OCI-LY7 (cell line): ENCODE measurements at regions of chr9 and their contacts with region 1.

Region 1: DNA sequence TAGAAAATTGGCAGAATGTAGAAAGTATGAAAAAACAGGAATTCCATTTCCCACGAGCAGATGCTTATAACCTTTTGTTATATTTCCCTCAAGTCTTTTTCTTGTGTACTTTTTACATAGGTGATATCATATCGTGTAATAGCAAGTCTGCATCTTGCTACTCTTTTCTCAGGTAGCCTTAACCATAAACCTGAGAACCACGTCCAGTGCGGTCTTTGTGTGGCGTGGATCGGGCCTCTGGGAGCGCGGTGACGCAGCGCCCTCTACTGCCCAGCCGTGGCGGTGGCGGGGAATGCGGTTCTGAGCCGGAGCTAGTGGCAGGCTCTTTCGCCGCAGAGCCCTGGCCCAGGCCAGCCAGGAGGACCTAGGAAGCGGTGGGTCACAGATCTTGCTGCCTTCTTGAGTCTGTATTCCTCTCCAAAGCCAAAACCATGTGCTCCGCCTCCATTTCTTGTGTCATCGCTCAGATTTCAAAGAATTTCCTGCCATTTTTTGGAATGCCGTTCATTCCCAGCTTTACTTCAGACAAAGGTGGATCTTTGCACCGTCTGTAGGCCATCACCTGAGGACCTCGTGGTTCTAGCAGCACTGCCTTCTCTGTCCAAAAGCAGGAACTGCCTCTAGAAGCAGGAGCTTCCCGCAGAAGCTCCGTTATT is 71.9 kb downstream of the MVB12B start:
- DNase-seq: peak; percentile 54
- H3K4me3 ChIP-seq: no peak overlapping the region
- H3K27ac ChIP-seq: no peak overlapping the region
- H3K4me1 ChIP-seq: no peaks in the 10 kb centered on the region
- CTCF ChIP-seq: peak; percentile 98

Region 2: GRCh38 chr9:125407974-125408900 is 990.3 kb before region 1 on chr9:
- CTCF ChIA-PET with region 1: no interaction called
- POLR2A ChIA-PET with region 1: no interaction called
- intact Hi-C with region 1: loop called (anchors 2 kb)
- DNase-seq: peak; percentile 84
- H3K4me3 ChIP-seq: peak overlapping the region; percentile 60
- H3K27ac ChIP-seq: no peak overlapping the region
- H3K4me1 ChIP-seq: peaks cover 21% of the 10 kb centered on the region
- CTCF ChIP-seq: peak; percentile 83

Region 3: DNA sequence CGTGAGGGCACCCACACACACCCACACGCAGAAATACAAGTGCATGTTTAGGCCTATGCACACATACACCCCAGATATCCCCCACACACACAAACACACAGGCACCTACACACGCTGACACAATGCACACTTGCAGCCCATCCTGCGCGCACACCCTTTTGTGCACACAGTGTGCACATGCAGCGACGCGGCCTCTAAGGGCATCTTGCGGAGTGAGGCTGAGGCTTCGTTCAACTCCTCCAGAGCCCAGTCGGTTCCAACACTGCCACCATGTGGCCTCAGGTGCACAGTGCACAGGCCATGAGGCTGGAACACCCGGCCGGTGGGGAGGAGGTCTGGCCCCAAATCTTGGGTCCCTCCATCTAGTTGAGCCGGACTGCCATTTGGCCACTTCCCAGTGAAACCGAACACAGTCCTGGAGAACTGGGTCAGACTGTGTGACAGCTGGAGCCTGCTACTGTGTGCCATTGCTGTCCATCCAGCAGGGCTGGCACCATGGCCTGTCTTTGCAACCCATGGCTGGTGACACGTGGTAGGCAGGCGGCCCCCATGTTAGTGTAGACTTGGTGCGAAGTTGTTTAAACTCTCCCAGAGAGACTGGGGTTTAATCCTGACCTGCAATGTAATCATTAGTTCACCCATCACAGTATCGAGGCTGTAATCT is 169.6 kb before region 1 on chr9:
- CTCF ChIA-PET with region 1: no interaction called
- POLR2A ChIA-PET with region 1: no interaction called
- intact Hi-C with region 1: no loop called
- DNase-seq: peak; percentile 55
- H3K4me3 ChIP-seq: no peak overlapping the region
- H3K27ac ChIP-seq: no peak overlapping the region
- H3K4me1 ChIP-seq: no peaks in the 10 kb centered on the region
- CTCF ChIP-seq: peak; percentile 88

Region 4: DNA sequence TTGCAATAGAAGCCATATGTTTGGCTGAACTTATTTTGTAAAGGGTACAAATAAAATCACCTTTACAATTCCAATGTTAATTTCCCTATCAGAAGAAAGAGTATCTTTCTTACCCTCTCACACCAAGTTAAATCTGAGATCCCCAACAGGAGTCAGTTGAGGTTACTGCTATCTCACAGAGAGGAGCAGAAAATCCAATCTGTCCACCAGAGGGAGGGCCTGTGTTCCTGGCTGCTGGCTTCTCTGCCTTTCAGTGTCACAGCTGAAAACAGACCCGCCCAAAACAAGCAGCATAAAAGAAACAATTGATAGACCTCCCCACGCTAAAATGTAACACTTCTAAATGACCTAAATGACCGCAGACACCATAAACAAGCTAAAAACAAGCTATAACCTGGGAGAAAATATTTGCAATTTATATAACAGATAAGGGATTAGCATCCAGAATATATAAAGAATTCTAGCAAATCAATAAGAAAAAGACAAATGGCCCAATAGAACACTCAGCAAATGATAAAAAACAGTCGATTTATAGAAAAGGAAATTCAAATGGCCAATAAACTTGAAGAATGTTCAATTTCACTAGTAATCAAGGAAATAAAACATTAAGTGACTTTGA is 96.4 kb before region 1 on chr9:
- CTCF ChIA-PET with region 1: no interaction called
- POLR2A ChIA-PET with region 1: interaction called, 3 read pairs
- intact Hi-C with region 1: loop called (anchors 2 kb)
- DNase-seq: peak; percentile 44
- H3K4me3 ChIP-seq: no peak overlapping the region
- H3K27ac ChIP-seq: no peak overlapping the region
- H3K4me1 ChIP-seq: no peaks in the 10 kb centered on the region
- CTCF ChIP-seq: peak; percentile 78

Region 5: DNA sequence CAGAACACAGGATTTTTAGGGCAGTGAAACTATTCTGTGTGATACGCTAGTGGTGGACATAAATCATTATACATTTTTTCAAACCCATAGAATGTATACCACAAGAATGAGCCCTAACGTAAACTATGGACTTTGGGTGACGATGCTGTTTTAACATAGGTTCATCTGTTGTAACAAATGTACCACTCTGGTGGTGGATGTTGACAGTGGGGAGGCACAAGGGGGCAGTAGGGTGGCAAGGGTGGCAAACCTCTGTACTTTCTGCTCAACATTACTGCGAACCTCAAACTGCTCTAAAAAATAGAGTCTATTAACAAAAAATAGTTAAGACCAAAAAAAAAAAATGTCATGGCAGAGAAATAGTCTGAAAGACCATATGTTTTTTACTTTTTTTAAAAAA is 81.0 kb before region 1 on chr9:
- CTCF ChIA-PET with region 1: no interaction called
- POLR2A ChIA-PET with region 1: no interaction called
- intact Hi-C with region 1: loop called (anchors 2 kb)
- DNase-seq: no peak
- H3K4me3 ChIP-seq: no peak overlapping the region
- H3K27ac ChIP-seq: no peak overlapping the region
- H3K4me1 ChIP-seq: no peaks in the 10 kb centered on the region
- CTCF ChIP-seq: peak; percentile 53